AG04449 (cell line): ENCODE measurements at regions of chr6 and their contacts with region 1.

Region 1: GRCh38 chr6:154868143-154868594 is 126.9 kb upstream of the TIAM2 start:
- DNase-seq: no peak
- H3K4me3 ChIP-seq: no peak overlapping the region
- CTCF ChIP-seq: peak; percentile 49

Region 2: GRCh38 chr6:154156135-154156896 is 711.9 kb before region 1 on chr6:
- CTCF ChIA-PET with region 1: no interaction called
- POLR2A ChIA-PET with region 1: no interaction called
- DNase-seq: no peak
- H3K4me3 ChIP-seq: no peak overlapping the region
- CTCF ChIP-seq: peak; percentile 80

Region 3: GRCh38 chr6:154830771-154831170 is 37.4 kb before region 1 on chr6:
- CTCF ChIA-PET with region 1: no interaction called
- POLR2A ChIA-PET with region 1: no interaction called
- DNase-seq: no peak
- H3K4me3 ChIP-seq: no peak overlapping the region
- CTCF ChIP-seq: no peak

Region 4: GRCh38 chr6:154842833-154843232 is 25.3 kb before region 1 on chr6:
- CTCF ChIA-PET with region 1: interaction called, 11 read pairs
- POLR2A ChIA-PET with region 1: no interaction called
- DNase-seq: no peak
- H3K4me3 ChIP-seq: no peak overlapping the region
- CTCF ChIP-seq: no peak

Region 5: GRCh38 chr6:154852687-154853086 is 15.5 kb before region 1 on chr6:
- CTCF ChIA-PET with region 1: interaction called, 24 read pairs
- POLR2A ChIA-PET with region 1: interaction called, 3 read pairs
- DNase-seq: no peak
- H3K4me3 ChIP-seq: no peak overlapping the region
- CTCF ChIP-seq: no peak

Region 6: GRCh38 chr6:154928325-154928922 is 60.3 kb after region 1 on chr6:
- CTCF ChIA-PET with region 1: interaction called, 57 read pairs
- POLR2A ChIA-PET with region 1: no interaction called
- DNase-seq: no peak
- H3K4me3 ChIP-seq: no peak overlapping the region
- CTCF ChIP-seq: peak; percentile 53

Region 7: DNA sequence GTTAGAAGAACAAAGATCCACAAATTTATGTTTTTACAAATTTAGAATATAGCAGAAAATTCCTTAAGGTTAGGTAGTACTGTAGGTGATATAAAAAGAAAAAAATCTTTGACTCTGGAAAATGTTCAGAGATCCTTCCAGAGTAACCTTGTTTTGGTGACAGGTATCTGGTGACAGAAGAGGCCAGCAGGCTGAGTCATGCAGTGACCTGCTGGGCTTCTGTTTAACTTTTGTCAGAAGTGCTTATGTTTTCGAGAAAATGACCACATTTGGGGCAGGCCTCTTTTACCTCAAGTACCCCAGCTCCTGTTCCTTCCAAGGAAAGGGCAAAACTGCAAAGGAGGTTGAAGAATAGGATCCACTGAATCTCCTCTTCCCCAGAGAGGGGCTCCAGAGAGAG is 385.2 kb after region 1 on chr6:
- CTCF ChIA-PET with region 1: interaction called, 11 read pairs
- POLR2A ChIA-PET with region 1: no interaction called
- DNase-seq: no peak
- H3K4me3 ChIP-seq: no peak overlapping the region
- CTCF ChIP-seq: no peak